ENCODE measurements at regions of chr17 and their contacts with region 1.

Region 1: GRCh38 chr17:45852535-45853297 is 8.0 kb downstream of the SPPL2C start:
- DNase-seq: peak; percentile 62
- ATAC-seq: peak; percentile 44
- H3K4me3 ChIP-seq: no peak overlapping the region
- H3K27ac ChIP-seq: no peak overlapping the region
- H3K4me1 ChIP-seq: no peaks in the 10 kb centered on the region
- H3K27me3 ChIP-seq: peaks cover 8 to 47% of the 10 kb centered on the region in 2 experiments; a peak in 3 of 5 replicates
- CTCF ChIP-seq: peak; percentile 90
- EP300 ChIP-seq: no peak
- POLR2A ChIP-seq: no peak
- RAD21 ChIP-seq: peak; percentile 67

Region 2: GRCh38 chr17:45640141-45640850 is 212.4 kb before region 1 on chr17:
- CTCF ChIA-PET with region 1: interaction called, 29 read pairs
- POLR2A ChIA-PET with region 1: no interaction called
- in situ Hi-C with region 1: no loop called
- intact Hi-C with region 1: loop called (anchors 5 kb)
- DNase-seq: peak; percentile 81
- ATAC-seq: peak; percentile 95
- H3K4me3 ChIP-seq: no peak overlapping the region
- H3K27ac ChIP-seq: no peak overlapping the region
- H3K4me1 ChIP-seq: no peaks in the 10 kb centered on the region
- H3K27me3 ChIP-seq: no peaks in the 10 kb centered on the region
- CTCF ChIP-seq: peak; percentile 98
- EP300 ChIP-seq: peak in 1 of 2 experiments; percentile 7; a peak in 1 of 4 replicates
- POLR2A ChIP-seq: no peak
- RAD21 ChIP-seq: peak; percentile 94

Region 3: GRCh38 chr17:45648642-45649041 is 204.1 kb before region 1 on chr17:
- CTCF ChIA-PET with region 1: no interaction called
- POLR2A ChIA-PET with region 1: no interaction called
- in situ Hi-C with region 1: no loop called
- intact Hi-C with region 1: loop called (anchors 5 kb)
- DNase-seq: no peak
- ATAC-seq: no peak
- H3K4me3 ChIP-seq: no peak overlapping the region
- H3K27ac ChIP-seq: no peak overlapping the region
- H3K4me1 ChIP-seq: peaks cover 19% of the 10 kb centered on the region
- H3K27me3 ChIP-seq: peaks cover 11 to 44% of the 10 kb centered on the region in 2 experiments
- CTCF ChIP-seq: 0 out of 2 replicates have a peak, but pooled peaks have one; percentile 12
- EP300 ChIP-seq: no peak
- POLR2A ChIP-seq: no peak
- RAD21 ChIP-seq: no peak

Region 4: DNA sequence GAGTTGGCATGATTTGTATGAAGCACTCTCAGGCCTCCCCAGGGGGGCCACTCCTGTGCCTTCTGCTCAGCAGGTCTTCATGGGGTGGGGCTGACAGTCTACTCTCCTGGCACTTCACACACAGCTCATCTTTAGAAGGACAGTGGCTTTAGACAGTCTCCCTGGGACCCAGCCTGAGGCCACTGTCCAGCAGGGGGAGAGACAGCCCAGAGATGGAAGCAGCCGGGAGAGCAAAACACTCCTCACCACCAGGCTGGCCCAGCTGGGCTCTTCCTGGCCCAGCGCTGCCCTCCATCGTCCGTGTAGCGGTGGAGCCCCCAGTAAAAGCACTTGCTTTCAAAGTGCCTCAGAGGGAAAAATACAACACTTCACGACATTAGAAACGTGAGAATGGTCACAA is 130.6 kb before region 1 on chr17:
- CTCF ChIA-PET with region 1: no interaction called
- POLR2A ChIA-PET with region 1: no interaction called
- in situ Hi-C with region 1: no loop called
- intact Hi-C with region 1: loop called (anchors 1 kb)
- DNase-seq: peak; percentile 58
- ATAC-seq: peak; percentile 99
- H3K4me3 ChIP-seq: no peak overlapping the region
- H3K27ac ChIP-seq: no peak overlapping the region
- H3K4me1 ChIP-seq: no peaks in the 10 kb centered on the region
- H3K27me3 ChIP-seq: peaks cover 2 to 50% of the 10 kb centered on the region in 2 experiments; a peak in 4 of 5 replicates
- CTCF ChIP-seq: peak; percentile 80
- EP300 ChIP-seq: no peak
- POLR2A ChIP-seq: no peak
- RAD21 ChIP-seq: peak; percentile 84

Region 5: GRCh38 chr17:45814622-45815606 is 37.8 kb before region 1 on chr17:
- CTCF ChIA-PET with region 1: no interaction called
- POLR2A ChIA-PET with region 1: no interaction called
- in situ Hi-C with region 1: no loop called
- intact Hi-C with region 1: no loop called
- DNase-seq: no peak
- ATAC-seq: no peak
- H3K4me3 ChIP-seq: no peak overlapping the region
- H3K27ac ChIP-seq: no peak overlapping the region
- H3K4me1 ChIP-seq: peaks cover 23% of the 10 kb centered on the region
- H3K27me3 ChIP-seq: peaks cover 10 to 61% of the 10 kb centered on the region in 2 experiments; a peak in 4 of 5 replicates
- CTCF ChIP-seq: no peak
- EP300 ChIP-seq: no peak
- POLR2A ChIP-seq: no peak
- RAD21 ChIP-seq: no peak